Right cardiac atrium (tissue), 5 donors: ENCODE measurements at regions of chr1 and their contacts with region 1.

Region 1: DNA sequence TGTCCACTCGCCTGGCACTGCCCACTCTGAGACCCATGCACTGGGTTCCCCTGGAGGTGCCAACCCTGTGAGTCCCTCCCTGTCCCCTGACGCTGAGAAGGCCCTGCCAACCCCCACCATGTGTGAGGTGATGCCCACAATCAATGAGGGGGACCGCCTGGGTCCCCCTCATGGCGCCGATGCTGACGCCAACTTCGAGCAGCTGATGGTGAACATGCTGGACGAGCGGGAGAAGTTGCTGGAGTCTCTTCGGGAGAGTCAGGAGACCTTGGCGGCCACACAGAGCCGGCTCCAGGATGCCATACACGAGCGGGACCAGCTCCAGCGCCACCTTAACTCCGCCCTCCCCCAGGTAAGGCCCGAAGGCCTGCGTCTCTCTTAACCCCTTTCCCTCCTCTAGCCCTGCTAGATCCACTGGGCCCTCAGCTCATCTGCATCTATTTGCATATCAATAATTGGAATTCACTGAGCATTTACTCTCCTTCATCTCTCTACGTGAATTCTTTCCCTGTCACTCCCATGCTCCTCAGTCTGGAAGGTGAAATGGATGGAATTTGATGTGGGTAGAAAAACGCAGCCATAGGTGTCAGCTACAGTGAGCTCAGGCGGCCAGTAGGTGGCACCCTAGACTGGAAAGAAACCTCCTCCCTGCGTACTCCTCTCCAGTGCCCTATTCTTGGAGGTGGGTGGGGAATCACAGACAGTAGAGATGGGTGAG is 12.8 kb downstream of the PPFIA4 start:
- DNase-seq: peak; percentile 78 to 91 (median 88)
- ATAC-seq: peak; percentile 80 to 84
- H3K4me3 ChIP-seq: no peak overlapping the region
- H3K27ac ChIP-seq: peak overlapping the region; percentile 87
- H3K4me1 ChIP-seq: peaks cover 9% of the 10 kb centered on the region
- H3K27me3 ChIP-seq: no peaks in the 10 kb centered on the region

Region 2: DNA sequence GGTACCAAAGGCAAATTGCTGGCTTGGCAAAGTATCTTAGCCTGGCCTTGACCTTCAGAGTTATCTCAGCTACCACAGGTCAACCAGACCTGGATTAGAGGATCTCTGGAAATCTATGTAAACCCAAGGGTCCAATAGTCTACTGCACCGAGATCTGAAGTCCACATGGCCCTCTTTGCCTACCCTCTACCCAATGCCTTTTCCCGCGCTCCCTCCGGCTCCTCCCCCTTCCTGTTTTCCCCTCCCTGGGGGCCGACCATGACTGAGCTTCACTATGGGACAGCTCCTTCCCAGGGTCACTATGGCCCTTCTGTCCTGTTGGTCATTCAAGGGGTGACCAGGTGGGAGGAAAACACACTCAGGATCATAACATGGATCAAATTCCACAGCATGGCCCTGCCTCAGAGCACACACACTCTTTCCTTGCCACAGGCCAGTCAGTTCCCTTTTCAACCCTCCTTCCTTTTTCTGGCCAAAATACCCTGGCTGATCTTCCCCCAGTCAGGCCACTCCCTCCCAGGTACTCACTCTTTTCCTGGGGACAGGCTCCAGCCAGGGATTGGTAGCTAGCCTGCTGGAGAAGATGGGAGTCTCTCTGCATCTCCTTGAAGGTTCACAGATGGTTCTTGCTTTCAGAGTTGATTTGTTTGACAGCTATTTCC is 51.0 kb before region 1 on chr1:
- intact Hi-C with region 1: no loop called
- DNase-seq: no peak
- ATAC-seq: no peak
- H3K4me3 ChIP-seq: no peak overlapping the region
- H3K27ac ChIP-seq: no peak overlapping the region
- H3K4me1 ChIP-seq: no peaks in the 10 kb centered on the region
- H3K27me3 ChIP-seq: no peaks in the 10 kb centered on the region

Region 3: GRCh38 chr1:203006948-203007871 is 31.8 kb before region 1 on chr1 and contains the start of gene TMEM183A:
- intact Hi-C with region 1: no loop called
- DNase-seq: peak; percentile 98
- ATAC-seq: peak; percentile 99
- H3K4me3 ChIP-seq: peak within 1 kb of the TSS; percentile 85
- H3K27ac ChIP-seq: peak within 1 kb of the TSS; percentile 90
- H3K4me1 ChIP-seq: no peaks in the 10 kb centered on the region
- H3K27me3 ChIP-seq: no peaks in the 10 kb centered on the region
- total RNA-seq, gene TMEM183A: 25.9 to 35.8 (median 28.1) TPM

Region 4: GRCh38 chr1:203117611-203118575 is 78.8 kb after region 1 on chr1:
- intact Hi-C with region 1: loop called in 2 of 4 experiments (anchors 5 kb)
- DNase-seq: peak; percentile 81 to 92 (median 90)
- ATAC-seq: peak; percentile 91
- H3K4me3 ChIP-seq: no peak overlapping the region
- H3K27ac ChIP-seq: no peak overlapping the region
- H3K4me1 ChIP-seq: peaks cover 3% of the 10 kb centered on the region
- H3K27me3 ChIP-seq: no peaks in the 10 kb centered on the region

Region 5: GRCh38 chr1:203129501-203130231 is 90.6 kb after region 1 on chr1:
- intact Hi-C with region 1: no loop called
- DNase-seq: peak; percentile 66 to 86 (median 86)
- ATAC-seq: peak; percentile 38 to 62
- H3K4me3 ChIP-seq: no peak overlapping the region
- H3K27ac ChIP-seq: peak overlapping the region; percentile 84
- H3K4me1 ChIP-seq: peaks cover 6% of the 10 kb centered on the region
- H3K27me3 ChIP-seq: no peaks in the 10 kb centered on the region

Region 6: DNA sequence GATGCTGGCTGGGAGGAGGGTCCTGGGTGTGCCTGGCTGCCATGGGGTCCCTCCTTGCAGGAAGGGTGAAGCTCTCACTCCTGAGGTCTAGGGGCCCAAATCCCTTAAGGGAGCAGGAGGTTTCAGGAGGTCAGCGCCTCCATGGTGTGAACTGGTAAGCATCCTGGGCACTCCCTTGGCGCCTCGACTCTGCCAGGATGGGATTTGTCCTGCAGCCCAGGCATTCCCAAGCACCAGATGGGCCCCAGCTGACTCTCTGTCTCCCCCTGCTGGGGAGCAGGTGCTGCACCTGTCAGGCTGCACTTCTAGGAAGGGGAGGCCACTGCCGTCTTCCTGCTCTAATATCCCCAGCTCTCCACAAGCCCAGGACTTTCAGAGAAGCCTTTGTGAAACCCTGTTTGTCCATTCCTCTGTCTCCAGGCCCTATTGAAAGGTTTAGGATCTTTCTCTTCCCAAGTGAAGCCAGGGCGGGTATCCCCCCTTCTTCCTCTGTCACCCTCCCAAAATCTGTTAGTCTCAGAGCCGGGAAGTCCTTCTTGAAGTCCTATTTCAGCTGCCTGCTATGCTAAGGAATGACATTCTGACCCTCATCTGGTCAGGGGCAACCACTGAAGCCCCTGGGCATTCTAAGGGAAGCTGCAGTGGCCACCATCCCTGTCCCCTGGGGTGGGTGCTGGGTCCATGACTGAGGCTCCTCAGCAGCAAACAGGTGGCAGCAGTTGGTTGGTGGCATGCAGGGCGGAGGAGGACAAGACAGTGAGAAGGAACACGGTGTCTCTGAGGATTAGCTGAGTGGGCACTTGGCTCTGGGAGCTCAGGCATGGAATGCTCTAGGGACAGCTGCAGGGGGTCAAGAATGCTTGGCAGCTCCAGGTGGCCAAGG is 133.3 kb after region 1 on chr1:
- intact Hi-C with region 1: loop called in 1 of 4 experiments (anchors 5 kb)
- DNase-seq: peak; percentile 44 to 84 (median 72)
- ATAC-seq: peak; percentile 36 to 57
- H3K4me3 ChIP-seq: no peak overlapping the region
- H3K27ac ChIP-seq: no peak overlapping the region
- H3K4me1 ChIP-seq: peaks cover 6% of the 10 kb centered on the region
- H3K27me3 ChIP-seq: no peaks in the 10 kb centered on the region

Region 7: DNA sequence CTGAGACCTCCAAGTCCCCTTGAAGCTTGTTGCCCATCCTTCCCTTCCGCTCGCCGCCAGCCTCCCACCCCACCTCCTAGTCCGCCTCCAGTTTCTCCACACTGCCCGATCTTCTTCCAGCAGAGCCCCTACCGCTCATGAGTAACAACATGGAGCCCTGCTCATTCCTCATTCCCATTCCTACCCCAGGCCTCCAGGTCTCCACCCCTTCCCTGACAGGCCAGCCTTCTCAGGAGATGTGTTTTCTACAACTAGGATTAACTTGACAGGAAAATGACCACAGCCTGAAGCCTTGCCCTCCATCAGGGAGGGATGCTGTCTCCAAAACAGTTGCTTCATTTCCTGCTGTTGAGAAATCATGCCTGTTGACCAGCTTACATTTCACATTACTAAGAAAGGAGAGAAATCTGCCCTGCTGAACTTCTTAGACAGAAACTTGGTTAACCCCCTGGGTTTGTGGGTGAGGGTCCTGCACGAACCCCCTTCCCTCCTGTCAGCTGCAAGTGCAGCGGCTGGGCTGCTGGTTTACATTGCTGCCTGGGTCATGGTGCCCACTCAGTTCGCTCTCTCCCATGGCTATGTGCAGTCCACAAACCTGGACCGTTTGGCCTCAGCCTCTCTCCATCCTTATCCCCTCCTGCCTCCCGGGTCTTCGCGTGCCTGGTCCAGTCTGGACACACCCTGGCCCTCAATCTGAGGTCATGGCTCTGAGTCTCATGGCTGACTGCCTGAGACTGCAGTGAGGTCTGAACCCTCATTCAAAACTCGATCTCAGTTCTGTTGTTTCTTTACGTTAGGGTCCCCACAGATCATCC is 163.6 kb after region 1 on chr1:
- intact Hi-C with region 1: no loop called
- DNase-seq: peak; percentile 74 to 80 (median 77)
- ATAC-seq: peak; percentile 78 to 84
- H3K4me3 ChIP-seq: no peak overlapping the region
- H3K27ac ChIP-seq: peak overlapping the region; percentile 62
- H3K4me1 ChIP-seq: peaks cover 11% of the 10 kb centered on the region
- H3K27me3 ChIP-seq: no peaks in the 10 kb centered on the region

Region 8: GRCh38 chr1:203216274-203217138 is 177.5 kb after region 1 on chr1:
- intact Hi-C with region 1: loop called (anchors 2 to 5 kb)
- DNase-seq: peak in 2 of 3 donors; percentile 25 to 64
- ATAC-seq: peak; percentile 58 to 76
- H3K4me3 ChIP-seq: no peak overlapping the region
- H3K27ac ChIP-seq: no peak overlapping the region
- H3K4me1 ChIP-seq: no peaks in the 10 kb centered on the region
- H3K27me3 ChIP-seq: no peaks in the 10 kb centered on the region

Region 9: GRCh38 chr1:203267347-203267846 is 228.3 kb after region 1 on chr1:
- intact Hi-C with region 1: loop called in 1 of 4 experiments (anchors 10 kb)
- DNase-seq: peak; percentile 87 to 94 (median 93)
- ATAC-seq: peak; percentile 73
- H3K4me3 ChIP-seq: peak overlapping the region; percentile 78
- H3K27ac ChIP-seq: peak overlapping the region; percentile 93
- H3K4me1 ChIP-seq: no peaks in the 10 kb centered on the region
- H3K27me3 ChIP-seq: no peaks in the 10 kb centered on the region